HCT116 (cell line): ENCODE measurements at regions of chr22 and their contacts with region 1.

Region 1: DNA sequence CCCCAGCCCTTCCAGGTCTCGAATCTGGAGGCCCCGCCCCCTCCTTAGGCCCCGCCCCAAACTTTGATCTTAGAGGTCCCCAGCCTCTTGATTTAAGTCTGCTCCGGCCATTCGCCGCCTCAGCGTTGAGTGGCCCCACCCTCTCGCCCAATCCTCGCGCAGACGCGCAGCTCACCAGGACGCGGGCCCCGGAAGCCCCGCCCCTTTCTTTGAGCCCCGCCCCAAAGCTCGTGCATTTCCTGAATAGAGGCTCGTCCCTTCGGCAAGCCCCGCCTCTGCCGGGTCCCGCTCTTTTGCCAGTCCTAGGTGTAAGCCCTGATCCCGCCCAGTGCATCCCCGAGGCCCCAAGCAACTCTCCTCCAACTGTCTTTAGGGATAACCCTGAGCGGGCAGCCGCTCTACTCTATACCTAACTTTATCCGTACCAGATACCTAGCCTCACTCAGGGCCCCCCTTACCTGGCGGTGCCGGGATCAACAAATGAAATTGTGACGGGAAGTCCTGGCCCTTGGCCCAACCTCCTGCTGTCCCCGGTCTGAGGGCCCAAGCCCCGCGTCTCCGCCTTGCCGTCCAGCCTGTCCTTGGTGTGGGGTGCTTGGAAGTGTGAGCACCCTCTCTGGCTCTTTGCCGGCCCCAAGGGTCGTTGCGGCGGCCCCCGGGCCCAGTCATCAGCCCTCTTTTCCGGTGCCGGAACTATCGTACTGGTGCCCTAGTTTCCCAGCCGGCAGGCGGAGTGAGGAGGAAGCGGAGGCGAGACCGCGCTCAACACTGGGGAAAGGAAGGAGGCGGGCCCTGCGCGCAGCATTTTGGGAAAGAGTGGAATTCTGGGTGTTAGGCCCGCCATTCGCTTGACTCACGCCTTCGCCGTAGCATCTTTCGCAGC is at the start of gene SNRPD3:
- DNase-seq: peak; percentile 97
- ATAC-seq: peak; percentile 91
- H3K4me3 ChIP-seq: peak within 1 kb of the TSS; percentile 70 to 95
- H3K27ac ChIP-seq: peak within 1 kb of the TSS; percentile 87
- H3K4me1 ChIP-seq: peaks cover 11 to 23% of the 10 kb centered on the region in 2 experiments
- H3K27me3 ChIP-seq: no peaks in the 10 kb centered on the region
- CTCF ChIP-seq: no peak
- POLR2A ChIP-seq: peak; percentile 66
- RAD21 ChIP-seq: no peak
- total RNA-seq, gene SNRPD3: 144 TPM

Region 2: GRCh38 chr22:24466716-24467328 is 88.6 kb before region 1 on chr22:
- CTCF ChIA-PET with region 1: no interaction called
- POLR2A ChIA-PET with region 1: no interaction called
- RAD21 ChIA-PET with region 1: interaction called in 1 of 2 experiments, 13 read pairs
- intact Hi-C with region 1: no loop called
- DNase-seq: peak; percentile 6
- ATAC-seq: peak; percentile 62
- H3K4me3 ChIP-seq: peak overlapping the region in 1 of 2 experiments; percentile 25; a peak in 2 of 4 replicates
- H3K27ac ChIP-seq: peak overlapping the region; percentile 58; the same call in 1 of the 2 replicates
- H3K4me1 ChIP-seq: peaks cover 25 to 39% of the 10 kb centered on the region in 2 experiments
- H3K27me3 ChIP-seq: no peaks in the 10 kb centered on the region
- CTCF ChIP-seq: no peak
- POLR2A ChIP-seq: no peak
- RAD21 ChIP-seq: no peak

Region 3: DNA sequence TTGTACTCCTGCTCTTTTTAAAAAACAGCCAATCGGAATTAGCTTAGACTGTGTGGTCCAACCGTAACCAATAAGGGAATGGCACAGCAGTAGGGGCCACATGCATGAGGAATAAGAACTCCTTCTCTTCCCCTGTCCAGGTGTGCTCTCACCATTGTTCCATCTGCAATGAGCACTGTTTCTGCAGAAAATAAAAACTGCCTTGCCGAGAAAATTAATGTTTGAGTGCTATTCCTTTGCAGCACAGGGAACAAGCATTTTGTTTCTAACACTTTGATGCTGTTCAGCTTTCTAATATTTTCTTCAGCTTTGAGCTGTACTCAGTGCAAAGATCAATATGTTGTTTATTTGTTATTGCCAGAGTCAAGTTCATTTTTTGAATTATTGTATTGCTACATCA is 161.2 kb after region 1 on chr22:
- CTCF ChIA-PET with region 1: no interaction called
- POLR2A ChIA-PET with region 1: no interaction called
- RAD21 ChIA-PET with region 1: no interaction called
- intact Hi-C with region 1: no loop called
- DNase-seq: no peak
- ATAC-seq: no peak
- H3K4me3 ChIP-seq: no peak overlapping the region
- H3K27ac ChIP-seq: no peak overlapping the region
- H3K4me1 ChIP-seq: no peaks in the 10 kb centered on the region
- H3K27me3 ChIP-seq: no peaks in the 10 kb centered on the region
- CTCF ChIP-seq: no peak
- POLR2A ChIP-seq: no peak
- RAD21 ChIP-seq: no peak